ENCODE measurements at regions of chr4 and their contacts with region 1.

Region 1: DNA sequence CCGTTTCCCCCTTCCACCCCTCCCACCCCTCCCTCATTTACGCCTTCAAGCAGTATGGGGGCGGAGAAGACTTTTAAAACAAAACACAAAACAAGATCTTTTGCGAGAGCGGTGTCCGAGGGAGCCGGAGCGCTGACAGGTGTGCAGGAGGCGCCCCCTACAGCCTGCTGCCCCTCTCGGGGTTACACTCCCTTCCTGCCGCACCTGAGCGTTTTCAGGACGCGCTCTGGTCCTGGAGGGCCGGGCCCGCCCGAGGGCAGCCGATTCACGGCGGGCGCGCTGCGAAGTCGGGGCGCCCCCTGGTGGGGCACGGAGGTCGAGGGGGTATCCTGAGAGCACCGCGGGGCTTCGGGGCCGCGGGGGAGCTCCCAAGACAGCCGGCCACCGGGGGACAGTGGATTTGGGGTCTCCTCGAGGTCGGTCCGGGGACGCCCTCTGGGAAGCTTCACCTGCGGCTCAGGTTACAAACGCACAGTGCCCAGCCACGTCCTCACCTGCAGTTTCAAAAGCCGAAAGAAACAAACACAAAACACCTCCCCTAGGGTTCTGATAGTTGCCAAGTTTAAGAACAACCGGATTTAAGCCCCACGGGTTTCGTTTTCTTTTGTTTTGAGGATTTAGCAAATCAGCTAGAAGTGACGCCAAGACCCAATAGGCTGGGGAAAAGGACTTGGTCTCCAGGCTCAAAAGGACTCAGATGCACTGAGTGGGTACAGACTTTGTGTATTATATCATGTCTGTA is 8.0 kb upstream of the NEUROG2 start:
- DNase-seq: peak; percentile 83
- ATAC-seq: peak; percentile 89
- H3K4me3 ChIP-seq: peak overlapping the region; percentile 33 to 63 (median 54)
- H3K4me3 Mint-ChIP-seq: peak overlapping the region; percentile 90
- H3K27ac ChIP-seq: no peak overlapping the region
- H3K27ac Mint-ChIP-seq: peak overlapping the region; percentile 28
- H3K4me1 ChIP-seq: peaks cover 36 to 44% of the 10 kb centered on the region in 2 donors
- H3K4me1 Mint-ChIP-seq: peaks cover 40% of the 10 kb centered on the region
- H3K27me3 ChIP-seq: peaks cover 0 to 52% (median 48%) of the 10 kb centered on the region in 4 experiments
- H3K27me3 Mint-ChIP-seq: peaks cover 65% of the 10 kb centered on the region
- CTCF ChIP-seq: peak; percentile 90

Region 2: GRCh38 chr4:112145326-112145819 is 378.6 kb before region 1 on chr4 and contains the start of gene FAM241A:
- CTCF ChIA-PET with region 1: no interaction called
- POLR2A ChIA-PET with region 1: no interaction called
- intact Hi-C with region 1: loop called (anchors 2 kb)
- DNase-seq: peak; percentile 89
- ATAC-seq: peak; percentile 98
- H3K4me3 ChIP-seq: peak within 1 kb of the TSS; percentile 66 to 97 (median 77)
- H3K4me3 Mint-ChIP-seq: peak within 1 kb of the TSS; percentile 89
- H3K27ac ChIP-seq: peak within 1 kb of the TSS; percentile 51 to 84
- H3K27ac Mint-ChIP-seq: peak within 1 kb of the TSS; percentile 74
- H3K4me1 ChIP-seq: peaks cover 8 to 12% of the 10 kb centered on the region in 2 donors
- H3K4me1 Mint-ChIP-seq: peaks cover 16% of the 10 kb centered on the region
- H3K27me3 ChIP-seq: no peaks in the 10 kb centered on the region
- H3K27me3 Mint-ChIP-seq: no peaks in the 10 kb centered on the region
- CTCF ChIP-seq: no peak
- total RNA-seq, gene FAM241A: 0.79 and 0.95 TPM in 2 replicates

Region 3: DNA sequence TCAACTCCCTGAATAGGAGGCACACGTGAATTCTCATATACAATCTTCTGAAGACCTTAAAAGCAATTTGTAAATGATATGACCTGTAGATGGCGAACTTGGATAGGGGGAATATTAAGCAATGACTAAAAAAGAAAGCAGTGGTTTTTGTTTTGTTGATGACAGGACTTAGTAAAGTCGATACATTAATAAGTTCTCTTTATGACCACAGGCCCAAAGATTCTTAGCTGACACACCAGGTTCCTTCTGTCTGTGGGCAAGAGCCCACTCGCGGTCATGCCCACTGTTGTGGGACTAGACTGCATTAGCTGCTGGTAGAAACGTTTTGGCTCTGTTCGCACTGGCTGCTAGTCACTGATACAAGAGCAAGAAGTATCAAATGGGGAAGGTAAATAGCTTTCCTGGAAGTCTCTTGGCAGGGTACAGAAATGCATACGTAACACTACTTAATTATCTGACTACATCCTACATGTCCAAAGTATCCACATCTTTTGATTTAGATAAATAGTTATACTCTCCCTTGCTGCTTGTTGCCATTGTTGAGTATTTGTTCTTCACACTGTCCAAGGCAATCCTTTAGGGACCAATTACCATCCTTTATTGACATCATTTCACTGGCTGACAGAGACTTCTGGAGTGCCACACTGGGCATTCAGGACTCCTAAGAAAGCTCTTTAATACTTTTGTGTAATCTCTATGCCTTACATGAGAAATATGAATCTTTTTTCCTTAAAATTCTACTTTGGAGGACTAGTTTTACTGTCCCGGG is 195.8 kb before region 1 on chr4:
- CTCF ChIA-PET with region 1: interaction called, 38 read pairs
- POLR2A ChIA-PET with region 1: no interaction called
- intact Hi-C with region 1: loop called (anchors 1 kb)
- DNase-seq: peak; percentile 70
- ATAC-seq: peak; percentile 47
- H3K4me3 ChIP-seq: no peak overlapping the region
- H3K4me3 Mint-ChIP-seq: peak overlapping the region; percentile 49
- H3K27ac ChIP-seq: no peak overlapping the region
- H3K27ac Mint-ChIP-seq: no peak overlapping the region
- H3K4me1 ChIP-seq: no peaks in the 10 kb centered on the region
- H3K4me1 Mint-ChIP-seq: peaks cover 5% of the 10 kb centered on the region
- H3K27me3 ChIP-seq: no peaks in the 10 kb centered on the region
- H3K27me3 Mint-ChIP-seq: no peaks in the 10 kb centered on the region
- CTCF ChIP-seq: peak; percentile 75

Region 4: GRCh38 chr4:112492321-112492720 is 31.6 kb before region 1 on chr4:
- CTCF ChIA-PET with region 1: no interaction called
- POLR2A ChIA-PET with region 1: no interaction called
- intact Hi-C with region 1: no loop called
- DNase-seq: no peak
- ATAC-seq: no peak
- H3K4me3 ChIP-seq: no peak overlapping the region
- H3K4me3 Mint-ChIP-seq: no peak overlapping the region
- H3K27ac ChIP-seq: no peak overlapping the region
- H3K27ac Mint-ChIP-seq: no peak overlapping the region
- H3K4me1 ChIP-seq: no peaks in the 10 kb centered on the region
- H3K4me1 Mint-ChIP-seq: no peaks in the 10 kb centered on the region
- H3K27me3 ChIP-seq: no peaks in the 10 kb centered on the region
- H3K27me3 Mint-ChIP-seq: no peaks in the 10 kb centered on the region
- CTCF ChIP-seq: no peak

Region 5: DNA sequence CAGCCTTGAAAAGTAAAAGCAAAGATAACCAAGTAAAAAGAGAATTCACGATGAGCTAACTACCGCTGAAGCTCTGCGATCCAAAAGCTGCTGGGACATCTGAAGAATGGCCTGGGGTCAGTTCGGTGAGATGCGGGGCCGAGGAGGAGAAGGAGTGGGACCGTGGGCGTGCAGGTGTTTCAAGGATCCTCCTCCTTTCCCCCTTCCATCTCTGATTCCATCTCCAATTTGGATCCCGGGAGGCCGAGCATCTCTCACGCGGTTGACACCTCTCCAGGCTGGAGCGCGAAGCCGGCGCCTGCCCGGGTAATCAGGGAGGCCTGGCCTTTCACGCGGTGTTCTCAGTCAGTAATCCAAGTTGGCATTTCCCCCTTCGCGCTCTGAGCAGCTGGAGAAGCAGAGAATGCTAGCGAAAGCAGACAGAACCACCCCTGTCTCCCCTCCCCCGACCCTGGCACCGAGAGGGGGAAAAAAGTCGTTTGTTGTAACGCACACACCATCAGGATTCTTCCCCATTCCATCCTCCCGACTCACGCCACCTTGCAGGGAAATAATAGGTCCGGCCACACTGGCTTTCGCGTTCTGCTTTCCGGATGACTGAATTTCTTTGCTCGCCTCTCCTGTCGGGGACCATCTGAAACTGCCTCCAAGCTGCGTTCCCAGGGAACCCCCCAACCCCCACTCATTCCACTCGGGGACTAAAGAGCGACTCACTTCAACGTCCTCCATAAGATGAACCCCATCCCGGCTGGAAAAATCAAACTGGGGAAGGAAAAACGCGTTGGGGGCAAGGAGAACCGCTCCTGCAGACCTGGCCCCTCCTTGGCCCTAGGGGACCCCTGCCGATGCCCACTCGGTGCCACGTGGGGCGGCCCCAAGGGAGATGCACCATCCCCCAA is 14.4 kb before region 1 on chr4:
- CTCF ChIA-PET with region 1: interaction called, 16 read pairs
- POLR2A ChIA-PET with region 1: interaction called, 8 read pairs
- intact Hi-C with region 1: loop called (anchors 2 kb)
- DNase-seq: peak; percentile 39
- ATAC-seq: no peak
- H3K4me3 ChIP-seq: peak overlapping the region in 3 of 5 experiments; percentile 21 to 57 (median 27)
- H3K4me3 Mint-ChIP-seq: peak overlapping the region; percentile 81
- H3K27ac ChIP-seq: no peak overlapping the region
- H3K27ac Mint-ChIP-seq: peak overlapping the region; percentile 54
- H3K4me1 ChIP-seq: peaks cover 36 to 50% of the 10 kb centered on the region in 2 donors
- H3K4me1 Mint-ChIP-seq: peaks cover 37% of the 10 kb centered on the region
- H3K27me3 ChIP-seq: peaks cover 4 to 75% (median 68%) of the 10 kb centered on the region in 4 experiments
- H3K27me3 Mint-ChIP-seq: peaks cover 80% of the 10 kb centered on the region
- CTCF ChIP-seq: no peak